ENCODE measurements at regions of chr20 and their contacts with region 1.

Region 1: GRCh38 chr20:10090588-10091166 is 55.9 kb downstream of the ANKEF1 start:
- DNase-seq: peak; percentile 12 to 39
- ATAC-seq: peak in 3 of 4 donors; percentile 63 to 73 (median 63)
- H3K4me3 ChIP-seq: no peak overlapping the region
- H3K27ac ChIP-seq: no peak overlapping the region
- H3K4me1 ChIP-seq: no peaks in the 10 kb centered on the region
- H3K27me3 ChIP-seq: no peaks in the 10 kb centered on the region
- CTCF ChIP-seq: peak; percentile 69

Region 2: GRCh38 chr20:9626357-9626756 is 464.3 kb before region 1 on chr20:
- intact Hi-C with region 1: loop called (anchors 2 to 10 kb)
- DNase-seq: no peak
- ATAC-seq: no peak
- H3K4me3 ChIP-seq: no peak overlapping the region
- H3K27ac ChIP-seq: no peak overlapping the region
- H3K4me1 ChIP-seq: no peaks in the 10 kb centered on the region
- H3K27me3 ChIP-seq: peaks cover 0 to 2% (median 0%) of the 10 kb centered on the region in 3 donors
- CTCF ChIP-seq: no peak

Region 3: GRCh38 chr20:9884061-9884460 is 206.6 kb before region 1 on chr20:
- intact Hi-C with region 1: no loop called
- DNase-seq: no peak
- ATAC-seq: no peak
- H3K4me3 ChIP-seq: no peak overlapping the region
- H3K27ac ChIP-seq: no peak overlapping the region
- H3K4me1 ChIP-seq: no peaks in the 10 kb centered on the region
- H3K27me3 ChIP-seq: no peaks in the 10 kb centered on the region
- CTCF ChIP-seq: no peak

Region 4: DNA sequence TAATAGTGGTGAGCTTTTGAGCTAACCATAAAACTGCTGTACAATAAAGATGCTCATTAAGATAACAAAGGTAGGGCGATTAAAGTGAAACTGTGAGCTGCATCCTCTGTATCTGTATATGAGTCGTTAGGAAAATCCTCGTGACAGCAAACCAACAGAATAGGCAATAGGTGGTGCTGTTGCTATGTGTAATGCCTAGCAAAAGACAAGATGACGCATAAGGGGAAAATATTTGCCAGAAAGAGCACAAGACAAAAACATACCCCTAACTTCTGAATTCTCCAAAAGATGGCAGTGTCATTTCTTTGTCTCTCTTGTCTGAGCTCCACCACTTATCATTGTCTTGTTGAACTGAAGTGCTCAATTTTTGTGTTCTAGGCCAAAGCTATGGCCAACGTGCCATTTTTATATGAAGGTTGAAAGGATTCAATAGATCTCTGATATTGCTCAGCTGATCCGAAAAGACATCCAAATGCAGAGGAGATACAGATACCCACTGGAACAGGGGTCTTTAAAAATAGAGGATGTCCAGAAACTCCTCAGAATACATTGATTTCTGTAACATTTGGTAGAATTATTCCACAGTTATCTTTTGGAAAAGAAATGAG is 112.2 kb before region 1 on chr20:
- intact Hi-C with region 1: loop called (anchors 2 kb)
- DNase-seq: no peak
- ATAC-seq: peak; percentile 67 to 85 (median 76)
- H3K4me3 ChIP-seq: no peak overlapping the region
- H3K27ac ChIP-seq: no peak overlapping the region
- H3K4me1 ChIP-seq: no peaks in the 10 kb centered on the region
- H3K27me3 ChIP-seq: no peaks in the 10 kb centered on the region
- CTCF ChIP-seq: peak; percentile 74

Measured in psoas muscle (tissue), 8 donors.